ENCODE measurements at regions of chr9 and their contacts with region 1.

Region 1: GRCh38 chr9:109918339-109919163 is 138.6 kb downstream of the PALM2AKAP2 start:
- DNase-seq: no peak
- H3K4me3 ChIP-seq: no peak overlapping the region
- H3K27ac ChIP-seq: no peak overlapping the region
- H3K4me1 ChIP-seq: peaks cover 0 to 7% of the 10 kb centered on the region in 2 donors
- H3K27me3 ChIP-seq: no peaks in the 10 kb centered on the region
- CTCF ChIP-seq: no peak
- POLR2A ChIP-seq: no peak

Region 2: GRCh38 chr9:109859433-109859832 is 59.1 kb before region 1 on chr9:
- intact Hi-C with region 1: no loop called
- DNase-seq: no peak
- H3K4me3 ChIP-seq: no peak overlapping the region
- H3K27ac ChIP-seq: no peak overlapping the region
- H3K4me1 ChIP-seq: no peaks in the 10 kb centered on the region
- H3K27me3 ChIP-seq: no peaks in the 10 kb centered on the region
- CTCF ChIP-seq: peak in 3 of 6 experiments; percentile 11 to 23 (median 14)
- POLR2A ChIP-seq: no peak

Region 3: DNA sequence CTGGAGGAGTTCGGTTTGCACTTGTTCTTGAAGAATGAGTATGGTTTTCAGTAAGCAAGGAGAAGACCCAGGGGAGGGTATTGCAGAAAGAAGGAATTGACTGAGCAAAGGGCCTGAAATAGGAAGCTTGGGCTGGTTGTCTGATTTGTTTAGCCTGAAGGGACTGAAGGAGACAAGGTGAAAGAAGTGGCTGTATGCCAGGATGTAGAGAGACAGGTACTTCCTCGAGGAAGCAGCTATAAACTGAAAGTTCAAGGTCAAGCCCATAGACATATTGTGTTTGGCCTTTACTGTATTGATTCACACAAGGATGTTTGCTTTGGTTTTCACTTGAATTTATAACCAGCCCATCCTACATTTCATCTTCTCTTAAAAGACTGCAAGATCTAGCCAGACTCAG is 44.5 kb after region 1 on chr9:
- intact Hi-C with region 1: loop called in 1 of 2 experiments (anchors 5 kb)
- DNase-seq: no peak
- H3K4me3 ChIP-seq: no peak overlapping the region
- H3K27ac ChIP-seq: no peak overlapping the region
- H3K4me1 ChIP-seq: peaks cover 0 to 15% of the 10 kb centered on the region in 2 donors
- H3K27me3 ChIP-seq: no peaks in the 10 kb centered on the region
- CTCF ChIP-seq: no peak
- POLR2A ChIP-seq: no peak

Region 4: DNA sequence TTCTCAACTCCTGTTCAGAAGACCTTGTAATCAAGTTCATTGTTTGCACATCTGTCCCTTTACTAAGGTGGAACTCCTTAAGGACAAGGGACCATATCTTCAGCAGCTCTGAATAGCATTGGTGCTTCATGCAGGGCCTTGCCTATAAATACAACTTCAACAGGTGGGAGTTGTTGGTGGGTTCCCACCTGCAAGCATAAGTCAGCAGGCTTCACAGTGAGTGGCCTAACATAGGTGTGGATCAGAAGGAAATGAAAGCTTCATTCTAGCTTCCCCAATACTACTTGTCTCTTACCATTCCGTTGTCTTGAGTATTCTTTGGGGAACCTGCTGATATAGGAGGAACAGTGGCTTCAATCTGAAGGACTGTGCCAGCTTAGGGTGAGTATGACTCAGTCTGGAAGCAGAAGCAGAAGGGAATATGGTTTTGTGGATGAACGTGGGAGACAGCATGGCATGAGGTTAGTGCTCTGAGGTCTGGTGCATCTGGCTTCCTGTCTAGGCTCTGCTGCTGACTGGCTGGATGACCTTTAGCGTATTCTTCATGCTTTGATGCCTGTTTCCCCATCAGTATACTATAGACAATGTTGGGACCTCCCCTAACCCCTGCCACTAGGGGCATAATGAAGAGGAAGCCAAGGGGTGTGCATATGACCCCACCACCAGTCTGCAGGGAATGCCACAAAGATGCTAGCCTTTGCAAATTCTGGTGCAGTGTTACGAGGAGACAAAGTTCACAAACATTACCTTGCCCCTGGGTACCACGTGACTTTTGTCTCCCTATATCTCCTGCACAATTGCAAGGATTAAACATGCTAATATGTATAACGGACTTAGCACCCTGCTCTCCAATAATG is 53.7 kb after region 1 on chr9:
- intact Hi-C with region 1: loop called in 1 of 2 experiments (anchors 10 kb)
- DNase-seq: peak in 4 of 7 donors; percentile 18 to 58 (median 32)
- H3K4me3 ChIP-seq: no peak overlapping the region
- H3K27ac ChIP-seq: no peak overlapping the region
- H3K4me1 ChIP-seq: peaks cover 19 to 38% of the 10 kb centered on the region in 2 donors
- H3K27me3 ChIP-seq: no peaks in the 10 kb centered on the region
- CTCF ChIP-seq: no peak
- POLR2A ChIP-seq: no peak